ENCODE measurements at regions of chr19 and their contacts with region 1.

Region 1: DNA sequence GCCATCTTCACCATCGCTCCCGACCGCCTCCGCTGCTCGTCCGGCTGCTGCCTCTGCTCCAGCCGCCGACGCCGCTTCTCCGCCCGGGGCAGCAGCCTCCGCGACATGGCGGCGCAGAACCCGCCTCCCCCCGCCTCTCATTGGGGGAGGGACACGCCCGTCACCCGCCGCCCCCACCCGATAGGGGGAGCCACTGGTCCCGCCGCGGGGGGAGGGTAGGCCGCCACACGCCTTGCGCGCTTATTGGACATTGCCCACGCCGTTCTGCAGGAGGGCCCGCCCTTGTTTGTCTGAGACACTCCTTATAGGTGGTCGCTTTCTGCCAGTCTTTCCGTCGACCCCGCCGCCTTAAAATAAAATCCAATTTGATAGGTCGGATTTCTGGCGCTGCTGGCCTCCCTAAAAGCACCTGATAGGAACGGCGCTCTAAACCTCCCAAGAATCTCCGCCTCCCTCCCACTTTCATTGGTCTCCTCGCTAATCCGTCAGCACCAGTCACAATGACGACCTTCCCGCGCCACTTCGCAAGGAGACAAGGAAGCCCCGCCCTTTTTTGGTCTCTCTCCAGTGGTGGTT is at the start of gene HNRNPL:
- DNase-seq: peak; percentile 99
- ATAC-seq: peak; percentile 61
- H3K4me3 Mint-ChIP-seq: peak within 1 kb of the TSS; percentile 93
- H3K27ac Mint-ChIP-seq: peak within 1 kb of the TSS; percentile 98
- H3K4me1 Mint-ChIP-seq: peaks cover 61% of the 10 kb centered on the region
- H3K27me3 Mint-ChIP-seq: no peaks in the 10 kb centered on the region
- CTCF ChIP-seq: no peak
- total RNA-seq, gene HNRNPL: 528 and 546 TPM in 2 replicates

Region 2: DNA sequence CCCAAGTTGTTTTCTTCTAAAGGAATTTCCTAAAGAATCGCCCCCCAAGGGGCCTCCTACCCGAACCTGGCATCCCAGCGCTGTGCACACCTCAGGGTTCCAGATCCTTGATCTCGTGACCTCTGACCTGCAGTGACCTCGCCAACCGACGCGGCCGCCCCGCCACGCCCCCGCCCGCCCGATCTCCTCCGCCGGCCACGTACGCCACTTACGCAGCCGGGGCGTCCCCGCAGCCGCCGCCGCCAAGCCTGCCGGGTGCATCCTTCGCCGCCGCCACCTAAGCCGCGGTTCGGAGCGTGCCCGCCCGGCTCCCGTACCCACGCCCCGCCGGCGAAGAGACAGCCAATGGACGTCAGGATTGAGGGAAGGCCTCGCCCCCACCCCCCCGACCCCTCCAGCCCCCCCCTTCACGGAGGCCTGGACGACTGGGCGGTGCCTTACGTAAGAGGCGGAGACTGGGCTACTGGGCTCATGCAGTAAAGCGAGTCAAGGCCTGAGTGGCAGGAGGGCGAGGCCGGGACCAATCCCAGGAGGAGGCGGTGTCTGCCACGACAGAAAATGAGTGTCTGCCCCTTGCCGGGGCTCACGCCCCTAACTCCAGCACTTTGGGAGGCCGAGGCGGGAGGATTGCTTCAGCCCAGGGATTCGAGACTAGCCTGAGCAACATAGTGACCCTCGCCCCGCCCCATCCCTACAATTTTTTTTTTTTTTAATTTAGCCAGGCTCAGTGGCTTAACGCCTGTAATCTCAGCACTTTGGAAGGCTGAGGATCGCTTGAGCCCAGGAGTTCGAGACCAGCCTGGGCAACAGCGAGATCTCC is 534.1 kb before region 1 on chr19 and contains the start of gene YIF1B:
- CTCF ChIA-PET with region 1: no interaction called
- POLR2A ChIA-PET with region 1: interaction called, 16 read pairs
- intact Hi-C with region 1: loop called (anchors 2 kb)
- DNase-seq: peak; percentile 89
- ATAC-seq: peak; percentile 92
- H3K4me3 Mint-ChIP-seq: peak within 1 kb of the TSS; percentile 85
- H3K27ac Mint-ChIP-seq: peak within 1 kb of the TSS; percentile 94
- H3K4me1 Mint-ChIP-seq: peaks cover 49% of the 10 kb centered on the region
- H3K27me3 Mint-ChIP-seq: no peaks in the 10 kb centered on the region
- CTCF ChIP-seq: no peak
- total RNA-seq, gene YIF1B: 28.7 and 30.1 TPM in 2 replicates

Region 3: DNA sequence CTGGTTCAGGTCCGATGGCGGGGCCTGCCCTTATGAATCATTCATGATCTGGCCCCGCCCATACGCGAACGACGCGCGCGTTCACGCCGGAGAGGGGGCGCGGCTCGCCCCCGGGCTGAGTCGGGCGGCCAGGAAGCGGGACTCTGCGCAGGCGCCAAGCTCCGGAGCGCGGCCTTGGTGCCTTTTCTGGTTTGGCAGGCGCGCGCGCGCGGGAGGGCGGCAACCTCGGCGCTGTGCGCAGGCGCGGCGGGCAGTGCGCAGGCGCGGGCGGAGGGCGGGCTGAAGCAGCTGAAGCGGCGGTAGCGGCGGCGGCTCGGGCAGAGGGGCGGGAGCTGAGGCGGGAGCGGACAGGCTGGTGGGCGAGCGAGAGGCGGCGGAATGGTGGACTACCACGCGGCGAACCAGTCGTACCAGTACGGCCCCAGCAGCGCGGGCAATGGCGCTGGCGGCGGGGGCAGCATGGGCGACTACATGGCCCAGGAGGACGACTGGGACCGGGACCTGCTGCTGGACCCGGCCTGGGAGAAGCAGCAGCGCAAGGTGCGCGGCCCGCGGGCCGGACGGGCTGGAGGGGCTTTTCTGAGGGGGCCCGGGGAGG is 202.5 kb before region 1 on chr19 and contains the start of gene ACTN4:
- CTCF ChIA-PET with region 1: no interaction called
- POLR2A ChIA-PET with region 1: interaction called, 7 read pairs
- intact Hi-C with region 1: loop called (anchors 1 kb)
- DNase-seq: peak; percentile 100
- ATAC-seq: peak; percentile 91
- H3K4me3 Mint-ChIP-seq: peak within 1 kb of the TSS; percentile 95
- H3K27ac Mint-ChIP-seq: peak within 1 kb of the TSS; percentile 82
- H3K4me1 Mint-ChIP-seq: peaks cover 42% of the 10 kb centered on the region
- H3K27me3 Mint-ChIP-seq: no peaks in the 10 kb centered on the region
- CTCF ChIP-seq: no peak
- total RNA-seq, gene ACTN4: 197 and 198 TPM in 2 replicates

Region 4: GRCh38 chr19:38769635-38770211 is 80.2 kb before region 1 on chr19:
- CTCF ChIA-PET with region 1: interaction called, 4 read pairs
- POLR2A ChIA-PET with region 1: interaction called, 29 read pairs
- intact Hi-C with region 1: no loop called
- DNase-seq: peak; percentile 94
- ATAC-seq: peak; percentile 89
- H3K4me3 Mint-ChIP-seq: peak overlapping the region; percentile 68
- H3K27ac Mint-ChIP-seq: peak overlapping the region; percentile 78
- H3K4me1 Mint-ChIP-seq: peaks cover 11% of the 10 kb centered on the region
- H3K27me3 Mint-ChIP-seq: no peaks in the 10 kb centered on the region
- CTCF ChIP-seq: peak; percentile 59

Region 5: DNA sequence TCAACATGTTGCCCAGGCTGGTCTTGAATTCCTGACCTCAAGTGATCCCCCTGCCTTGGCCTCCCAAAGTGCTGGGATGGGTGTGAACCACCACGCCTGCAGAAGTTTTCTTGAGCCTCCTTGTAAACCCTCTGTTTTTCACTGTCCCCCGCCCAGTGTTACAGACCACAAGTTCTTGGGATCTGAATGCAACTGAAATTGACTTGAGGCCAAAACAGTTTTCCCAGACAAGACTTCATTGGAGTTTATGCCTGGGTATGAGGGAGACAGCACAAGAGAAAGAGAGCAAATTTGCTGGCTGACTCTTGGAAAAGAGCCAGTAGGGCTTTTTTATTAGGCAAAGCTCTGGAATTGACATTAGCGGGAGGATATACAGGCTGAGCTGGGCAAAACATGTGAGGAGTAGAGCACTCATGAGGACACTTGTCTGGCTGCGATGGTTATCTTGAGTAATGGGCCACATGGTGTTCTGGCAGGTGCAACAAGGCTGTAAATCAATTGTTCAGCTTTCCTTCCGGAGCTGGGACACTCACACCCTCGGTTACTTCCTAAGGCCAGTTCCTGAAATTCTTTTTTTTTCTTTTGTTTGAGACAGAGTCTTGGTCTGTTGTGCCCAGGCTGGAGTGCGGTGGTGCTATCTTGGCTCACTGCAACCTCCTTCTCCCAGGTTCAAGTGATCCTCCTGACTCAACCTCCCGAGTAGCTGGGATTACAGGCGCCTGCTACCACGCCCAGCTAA is 12.5 kb after region 1 on chr19:
- CTCF ChIA-PET with region 1: interaction called, 10 read pairs
- POLR2A ChIA-PET with region 1: interaction called, 463 read pairs
- intact Hi-C with region 1: loop called (anchors 1 kb)
- DNase-seq: no peak
- ATAC-seq: no peak
- H3K4me3 Mint-ChIP-seq: peak overlapping the region; percentile 38
- H3K27ac Mint-ChIP-seq: peak overlapping the region; percentile 75
- H3K4me1 Mint-ChIP-seq: peaks cover 79% of the 10 kb centered on the region
- H3K27me3 Mint-ChIP-seq: no peaks in the 10 kb centered on the region
- CTCF ChIP-seq: no peak

Region 6: DNA sequence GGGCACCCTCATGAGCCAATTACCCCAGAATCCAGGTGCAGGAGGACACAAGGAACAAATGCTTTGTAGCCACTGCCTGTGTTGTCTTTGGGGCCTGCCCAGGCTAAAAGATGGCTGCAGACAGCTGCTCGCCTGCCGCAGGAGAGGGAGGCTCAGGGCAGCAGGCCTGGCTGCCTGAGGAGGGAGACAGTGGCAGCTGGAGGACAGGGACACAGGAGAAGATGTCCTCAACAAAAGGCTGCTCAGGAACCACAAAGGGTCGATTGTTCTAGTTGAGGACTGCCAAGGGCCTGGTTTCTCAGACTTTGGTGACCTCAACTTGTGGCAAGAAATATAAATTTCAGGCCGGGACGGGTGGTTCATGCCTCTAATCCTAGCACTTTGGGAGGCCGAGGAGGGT is 41.8 kb after region 1 on chr19:
- CTCF ChIA-PET with region 1: interaction called, 13 read pairs
- POLR2A ChIA-PET with region 1: interaction called, 8 read pairs
- intact Hi-C with region 1: loop called (anchors 1 kb)
- DNase-seq: no peak
- ATAC-seq: no peak
- H3K4me3 Mint-ChIP-seq: no peak overlapping the region
- H3K27ac Mint-ChIP-seq: no peak overlapping the region
- H3K4me1 Mint-ChIP-seq: peaks cover 1% of the 10 kb centered on the region
- H3K27me3 Mint-ChIP-seq: no peaks in the 10 kb centered on the region
- CTCF ChIP-seq: no peak

Region 7: DNA sequence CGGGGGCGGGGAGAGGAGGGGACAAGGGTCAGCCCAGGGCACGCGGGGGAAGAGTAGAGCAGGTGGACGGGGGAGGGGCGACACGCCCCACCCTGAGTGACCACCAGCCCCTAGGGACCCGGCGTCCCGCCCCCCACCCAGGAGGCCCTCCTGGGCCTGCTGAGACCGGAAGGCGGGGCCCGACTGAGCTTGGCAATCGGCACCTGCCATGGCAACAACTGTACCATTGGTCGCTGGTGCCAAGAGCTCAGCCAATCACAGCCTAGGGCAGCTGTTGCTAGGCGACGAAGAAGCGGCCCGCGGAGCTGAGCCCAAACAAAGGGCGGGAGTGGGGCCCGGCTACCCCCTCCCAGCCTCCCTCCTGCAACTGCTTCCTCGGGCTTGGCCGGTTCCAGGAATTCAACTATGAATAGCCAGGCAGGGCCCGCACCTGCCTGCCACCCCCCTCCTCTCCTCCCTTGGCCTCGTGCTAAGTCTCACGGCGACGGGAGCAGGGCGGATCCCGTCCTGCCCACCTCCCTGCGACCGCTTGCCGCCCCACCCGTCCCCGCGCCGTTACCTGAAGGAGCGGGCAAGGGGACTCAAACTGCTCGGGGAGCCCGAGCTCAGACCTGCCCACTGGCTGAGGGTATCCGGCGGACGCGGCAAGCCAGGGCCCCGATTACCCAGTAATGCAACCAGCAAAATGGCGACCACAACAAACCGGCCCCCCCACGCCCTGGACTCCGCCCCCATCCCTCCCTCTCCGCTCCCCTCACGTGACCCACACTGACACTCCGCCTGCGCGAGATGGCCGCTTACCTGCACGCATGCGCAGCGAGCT is 983.7 kb after region 1 on chr19 and contains the start of gene DYRK1B:
- CTCF ChIA-PET with region 1: no interaction called
- POLR2A ChIA-PET with region 1: no interaction called
- intact Hi-C with region 1: loop called (anchors 5 kb)
- DNase-seq: peak; percentile 90
- ATAC-seq: peak; percentile 86
- H3K4me3 Mint-ChIP-seq: peak within 1 kb of the TSS; percentile 82
- H3K27ac Mint-ChIP-seq: peak within 1 kb of the TSS; percentile 87
- H3K4me1 Mint-ChIP-seq: peaks cover 33% of the 10 kb centered on the region
- H3K27me3 Mint-ChIP-seq: no peaks in the 10 kb centered on the region
- CTCF ChIP-seq: no peak
- total RNA-seq, gene DYRK1B: 16.9 and 17.2 TPM in 2 replicates

Measured in activated B cell treated with CpG ODN at 0.5 μM for 24 hours (primary cell).